Heart left ventricle (tissue), 16 donors: ENCODE measurements at regions of chr19 and their contacts with region 1.

Region 1: GRCh38 chr19:13093407-13094105 is 9.1 kb downstream of the LYL1 start:
- DNase-seq: peak; percentile 80 to 91 (median 84)
- ATAC-seq: peak; percentile 36 to 75 (median 62)
- H3K4me3 ChIP-seq: no peak overlapping the region
- H3K27ac ChIP-seq: peak overlapping the region; percentile 36 to 96 (median 82)
- H3K4me1 ChIP-seq: peaks cover 0 to 97% (median 76%) of the 10 kb centered on the region in 12 donors
- H3K27me3 ChIP-seq: peaks cover 0 to 12% (median 0%) of the 10 kb centered on the region in 9 donors
- CTCF ChIP-seq: peak; percentile 90 to 98 (median 96)
- POLR2A ChIP-seq: no peak

Region 2: GRCh38 chr19:12881172-12881808 is 212.3 kb before region 1 on chr19 and contains the start of gene DNASE2:
- intact Hi-C with region 1: loop called in 1 of 10 experiments (anchors 10 kb)
- DNase-seq: peak; percentile 95 to 98 (median 96)
- ATAC-seq: peak; percentile 93 to 97 (median 94)
- H3K4me3 ChIP-seq: peak within 1 kb of the TSS; percentile 43 to 89 (median 72)
- H3K27ac ChIP-seq: peak within 1 kb of the TSS; percentile 72 to 93 (median 85)
- H3K4me1 ChIP-seq: peaks cover 0 to 56% (median 18%) of the 10 kb centered on the region in 12 donors
- H3K27me3 ChIP-seq: peaks cover 10 to 34% (median 23%) of the 10 kb centered on the region in 9 donors
- CTCF ChIP-seq: no peak
- POLR2A ChIP-seq: peak in 1 of 2 donors; percentile 79
- total RNA-seq, gene DNASE2: 15.9 to 41.1 (median 23.3) TPM

Region 3: DNA sequence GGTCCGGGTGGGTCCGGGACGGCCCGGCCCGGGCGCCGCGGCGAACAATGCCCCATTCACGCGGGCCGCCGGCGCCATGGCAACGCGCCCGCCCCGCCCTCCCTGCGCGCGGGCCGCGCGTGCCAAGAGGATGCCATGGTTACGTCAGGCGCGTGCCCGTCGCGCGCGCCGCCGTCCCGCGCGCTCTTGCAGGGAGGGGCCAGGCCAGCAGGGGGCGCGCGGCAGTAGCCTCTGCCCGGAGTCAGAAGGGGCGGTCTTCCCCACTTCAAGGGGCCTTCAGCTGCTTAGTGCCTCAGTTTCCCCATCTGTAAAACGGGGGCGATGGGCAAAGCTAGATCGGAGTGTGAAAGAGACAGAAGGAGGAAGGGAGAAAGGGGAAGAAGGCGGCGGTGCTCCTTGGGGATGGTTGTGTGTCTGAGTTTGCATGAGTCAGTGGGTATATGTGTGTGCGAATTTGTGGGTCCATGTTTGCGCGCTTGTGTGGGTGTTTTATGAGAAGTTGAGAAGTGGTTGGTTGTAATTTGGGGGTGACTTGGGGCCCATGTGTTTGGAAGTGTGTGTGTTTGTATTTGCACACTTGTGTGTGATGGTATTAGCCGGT is 109.9 kb before region 1 on chr19:
- intact Hi-C with region 1: loop called (anchors 1 to 2 kb)
- DNase-seq: peak; percentile 73 to 92 (median 83)
- ATAC-seq: peak; percentile 30 to 83 (median 78)
- H3K4me3 ChIP-seq: peak overlapping the region in 10 of 12 donors; percentile 26 to 50 (median 42)
- H3K27ac ChIP-seq: peak overlapping the region in 1 of 12 donors; percentile 47
- H3K4me1 ChIP-seq: peaks cover 0 to 28% (median 15%) of the 10 kb centered on the region in 12 donors
- H3K27me3 ChIP-seq: peaks cover 0 to 5% (median 0%) of the 10 kb centered on the region in 9 donors
- CTCF ChIP-seq: peak; percentile 76 to 99 (median 97)
- POLR2A ChIP-seq: peak in 1 of 2 donors; percentile 27

Region 4: GRCh38 chr19:13012690-13013608 is 80.6 kb before region 1 on chr19:
- intact Hi-C with region 1: no loop called
- DNase-seq: peak in 2 of 5 donors; percentile 64
- ATAC-seq: peak; percentile 15 to 64 (median 43)
- H3K4me3 ChIP-seq: peak overlapping the region in 10 of 12 donors; percentile 9 to 55 (median 43)
- H3K27ac ChIP-seq: peak overlapping the region; percentile 43 to 97 (median 79)
- H3K4me1 ChIP-seq: peaks cover 4 to 100% (median 83%) of the 10 kb centered on the region in 12 donors
- H3K27me3 ChIP-seq: peaks cover 0 to 56% (median 0%) of the 10 kb centered on the region in 9 donors
- CTCF ChIP-seq: no peak
- POLR2A ChIP-seq: no peak

Region 5: GRCh38 chr19:13023666-13024065 is 69.9 kb before region 1 on chr19:
- intact Hi-C with region 1: no loop called
- DNase-seq: no peak
- ATAC-seq: no peak
- H3K4me3 ChIP-seq: peak overlapping the region in 11 of 12 donors; percentile 24 to 64 (median 50)
- H3K27ac ChIP-seq: peak overlapping the region; percentile 86 to 97 (median 93)
- H3K4me1 ChIP-seq: peaks cover 8 to 97% (median 81%) of the 10 kb centered on the region in 12 donors
- H3K27me3 ChIP-seq: peaks cover 0 to 11% (median 0%) of the 10 kb centered on the region in 9 donors
- CTCF ChIP-seq: no peak
- POLR2A ChIP-seq: no peak

Region 6: GRCh38 chr19:13033819-13034611 is 59.5 kb before region 1 on chr19:
- intact Hi-C with region 1: loop called in 2 of 10 experiments (anchors 5 to 10 kb)
- DNase-seq: peak; percentile 82 to 92 (median 88)
- ATAC-seq: peak; percentile 43 to 64 (median 58)
- H3K4me3 ChIP-seq: no peak overlapping the region
- H3K27ac ChIP-seq: peak overlapping the region; percentile 37 to 89 (median 78)
- H3K4me1 ChIP-seq: peaks cover 17 to 100% (median 96%) of the 10 kb centered on the region in 12 donors
- H3K27me3 ChIP-seq: no peaks in the 10 kb centered on the region
- CTCF ChIP-seq: peak; percentile 61 to 85 (median 78)
- POLR2A ChIP-seq: no peak

Region 7: GRCh38 chr19:13051267-13052165 is 42.0 kb before region 1 on chr19:
- intact Hi-C with region 1: loop called in 2 of 10 experiments (anchors 5 kb)
- DNase-seq: peak in 4 of 5 donors; percentile 71 to 81 (median 72)
- ATAC-seq: peak in 2 of 4 donors; percentile 7 to 22
- H3K4me3 ChIP-seq: peak overlapping the region in 5 of 12 donors; percentile 5 to 33 (median 20)
- H3K27ac ChIP-seq: peak overlapping the region in 11 of 12 donors; percentile 90 to 99 (median 97)
- H3K4me1 ChIP-seq: peaks cover 29 to 94% (median 81%) of the 10 kb centered on the region in 12 donors
- H3K27me3 ChIP-seq: no peaks in the 10 kb centered on the region
- CTCF ChIP-seq: no peak
- POLR2A ChIP-seq: no peak

Region 8: DNA sequence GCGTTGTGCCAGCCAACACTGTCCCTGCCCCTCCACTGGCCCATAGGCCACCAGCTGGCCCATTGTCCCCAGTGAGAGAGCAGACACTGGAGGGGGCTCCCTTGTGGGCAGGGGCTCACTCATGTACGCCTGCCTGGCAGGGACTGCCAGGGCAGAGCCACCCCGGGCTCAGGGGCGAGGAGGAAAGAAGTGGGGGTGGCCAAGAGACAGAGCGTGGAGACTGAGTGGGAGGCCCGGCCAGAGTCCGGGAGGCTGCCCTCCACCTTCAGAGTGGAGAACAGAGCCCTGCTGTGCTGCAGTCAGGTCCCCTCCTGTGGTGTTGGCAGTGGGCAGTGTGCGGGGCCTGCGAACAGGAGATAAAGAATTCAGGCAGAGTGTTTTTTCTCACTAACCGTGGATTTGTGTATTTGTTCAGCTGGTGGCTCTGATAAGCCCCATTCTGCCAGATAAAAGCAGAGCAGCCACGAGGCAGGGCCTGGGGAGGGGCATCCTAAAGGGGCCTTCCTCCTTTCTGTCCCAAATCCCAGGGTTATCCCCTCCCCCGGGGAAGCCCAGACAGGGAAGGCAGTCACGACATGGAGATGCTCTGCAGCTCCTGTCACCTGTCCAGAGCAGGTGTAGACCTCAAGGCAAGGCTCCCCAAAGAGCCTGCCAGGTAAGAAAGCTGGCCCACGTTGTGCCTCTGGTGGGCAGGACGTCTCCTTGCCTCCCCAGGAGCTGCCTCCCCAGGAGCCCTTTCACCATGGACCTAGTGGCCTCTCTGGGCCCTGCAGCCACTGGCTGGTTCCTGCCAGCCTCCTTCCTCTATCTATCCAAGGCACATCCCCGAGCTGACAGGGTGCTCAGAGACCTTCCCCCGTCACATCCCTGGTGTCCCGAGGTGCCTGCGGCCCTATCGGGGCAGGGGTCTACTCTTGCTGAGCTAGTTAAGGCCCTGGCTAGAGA is 23.9 kb before region 1 on chr19:
- intact Hi-C with region 1: loop called in 1 of 10 experiments (anchors 2 kb)
- DNase-seq: no peak
- ATAC-seq: no peak
- H3K4me3 ChIP-seq: peak overlapping the region in 6 of 12 donors; percentile 4 to 33 (median 14)
- H3K27ac ChIP-seq: peak overlapping the region; percentile 61 to 98 (median 80)
- H3K4me1 ChIP-seq: peaks cover 43 to 85% (median 74%) of the 10 kb centered on the region in 12 donors
- H3K27me3 ChIP-seq: no peaks in the 10 kb centered on the region
- CTCF ChIP-seq: no peak
- POLR2A ChIP-seq: no peak